Activated CD4-positive, alpha-beta memory T cell treated with anti-CD3 and anti-CD28 coated beads, Interleukin-2, amount 10 ng/mL, durations not matched to agents 7 days and 5 days (primary cell): ENCODE measurements at regions of chr1 and their contacts with region 1.

Region 1: DNA sequence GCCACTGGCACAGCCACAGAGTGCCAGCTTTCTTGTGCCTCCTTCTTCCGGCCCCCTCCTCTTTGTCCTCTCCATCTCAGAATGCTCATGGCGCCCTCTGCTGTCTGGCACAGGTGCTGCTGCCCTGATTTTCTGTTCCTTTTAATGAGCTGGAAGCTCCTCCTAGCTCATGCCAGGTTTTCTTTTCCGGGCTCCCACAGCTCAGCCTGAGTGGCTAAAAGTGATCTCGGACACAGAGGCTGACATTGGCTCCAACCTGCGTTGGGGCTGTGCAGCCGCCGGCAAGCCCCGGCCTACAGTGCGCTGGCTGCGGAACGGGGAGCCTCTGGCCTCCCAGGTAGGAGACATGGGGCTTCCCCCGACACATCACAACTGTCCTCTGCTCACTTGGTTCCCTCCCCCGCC is 18.7 kb downstream of the CNTN2 start:
- DNase-seq: peak; percentile 76
- H3K4me3 Mint-ChIP-seq: no peak overlapping the region
- H3K27ac Mint-ChIP-seq: no peak overlapping the region
- H3K4me1 Mint-ChIP-seq: no peaks in the 10 kb centered on the region
- H3K27me3 Mint-ChIP-seq: no peaks in the 10 kb centered on the region

Region 2: GRCh38 chr1:204889681-204890383 is 171.8 kb before region 1 on chr1:
- CTCF ChIA-PET with region 1: no interaction called
- POLR2A ChIA-PET with region 1: no interaction called
- DNase-seq: no peak
- H3K4me3 Mint-ChIP-seq: no peak overlapping the region
- H3K27ac Mint-ChIP-seq: no peak overlapping the region
- H3K4me1 Mint-ChIP-seq: no peaks in the 10 kb centered on the region
- H3K27me3 Mint-ChIP-seq: peaks cover 44% of the 10 kb centered on the region

Region 3: GRCh38 chr1:204975570-204976235 is 86.0 kb before region 1 on chr1:
- CTCF ChIA-PET with region 1: interaction called, 36 read pairs
- POLR2A ChIA-PET with region 1: no interaction called
- DNase-seq: peak; percentile 47
- H3K4me3 Mint-ChIP-seq: no peak overlapping the region
- H3K27ac Mint-ChIP-seq: no peak overlapping the region
- H3K4me1 Mint-ChIP-seq: no peaks in the 10 kb centered on the region
- H3K27me3 Mint-ChIP-seq: peaks cover 23% of the 10 kb centered on the region

Region 4: DNA sequence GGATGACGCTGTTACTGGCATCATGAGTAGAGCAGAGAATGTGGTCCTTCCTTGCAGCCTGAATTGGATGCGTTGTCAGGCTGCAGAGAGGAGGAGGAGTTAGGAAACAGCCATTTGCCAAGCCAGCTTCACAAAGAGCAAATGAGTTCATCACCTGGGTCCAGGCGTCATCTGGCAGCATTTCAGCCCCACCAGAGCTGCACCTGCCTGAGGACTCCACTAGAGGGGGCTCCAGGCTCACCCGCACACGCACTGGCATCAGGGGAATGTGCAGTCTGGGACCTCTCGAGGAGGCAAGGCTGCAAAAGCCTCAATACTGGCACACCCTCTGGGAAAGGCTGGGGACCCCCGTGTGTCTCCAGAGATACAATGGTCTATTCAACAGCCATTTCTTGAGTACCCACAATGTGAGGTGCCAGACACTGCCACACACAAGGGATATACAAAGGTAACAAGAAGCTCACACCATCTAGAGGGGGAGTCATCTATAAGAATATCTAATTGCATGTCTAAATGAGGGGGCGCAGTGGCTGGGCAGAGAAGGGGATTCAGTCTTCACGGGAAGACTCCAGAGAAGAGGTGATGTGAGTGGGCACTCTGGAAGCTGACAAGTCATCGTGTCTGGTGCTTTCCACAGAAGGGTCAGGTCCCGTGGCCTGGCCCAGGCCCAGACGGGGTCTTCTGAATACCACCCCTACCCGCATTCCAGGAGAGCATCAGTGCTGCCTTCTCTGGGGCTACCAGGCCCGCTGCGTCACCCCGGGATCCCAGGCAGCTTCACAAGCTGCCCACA is 72.2 kb before region 1 on chr1:
- CTCF ChIA-PET with region 1: interaction called, 70 read pairs
- POLR2A ChIA-PET with region 1: no interaction called
- DNase-seq: peak; percentile 63
- H3K4me3 Mint-ChIP-seq: no peak overlapping the region
- H3K27ac Mint-ChIP-seq: no peak overlapping the region
- H3K4me1 Mint-ChIP-seq: peaks cover 16% of the 10 kb centered on the region
- H3K27me3 Mint-ChIP-seq: peaks cover 7% of the 10 kb centered on the region

Region 5: GRCh38 chr1:205040691-205041417 is 20.8 kb before region 1 on chr1:
- CTCF ChIA-PET with region 1: interaction called, 19 read pairs
- POLR2A ChIA-PET with region 1: no interaction called
- DNase-seq: no peak
- H3K4me3 Mint-ChIP-seq: no peak overlapping the region
- H3K27ac Mint-ChIP-seq: no peak overlapping the region
- H3K4me1 Mint-ChIP-seq: no peaks in the 10 kb centered on the region
- H3K27me3 Mint-ChIP-seq: peaks cover 44% of the 10 kb centered on the region

Region 6: DNA sequence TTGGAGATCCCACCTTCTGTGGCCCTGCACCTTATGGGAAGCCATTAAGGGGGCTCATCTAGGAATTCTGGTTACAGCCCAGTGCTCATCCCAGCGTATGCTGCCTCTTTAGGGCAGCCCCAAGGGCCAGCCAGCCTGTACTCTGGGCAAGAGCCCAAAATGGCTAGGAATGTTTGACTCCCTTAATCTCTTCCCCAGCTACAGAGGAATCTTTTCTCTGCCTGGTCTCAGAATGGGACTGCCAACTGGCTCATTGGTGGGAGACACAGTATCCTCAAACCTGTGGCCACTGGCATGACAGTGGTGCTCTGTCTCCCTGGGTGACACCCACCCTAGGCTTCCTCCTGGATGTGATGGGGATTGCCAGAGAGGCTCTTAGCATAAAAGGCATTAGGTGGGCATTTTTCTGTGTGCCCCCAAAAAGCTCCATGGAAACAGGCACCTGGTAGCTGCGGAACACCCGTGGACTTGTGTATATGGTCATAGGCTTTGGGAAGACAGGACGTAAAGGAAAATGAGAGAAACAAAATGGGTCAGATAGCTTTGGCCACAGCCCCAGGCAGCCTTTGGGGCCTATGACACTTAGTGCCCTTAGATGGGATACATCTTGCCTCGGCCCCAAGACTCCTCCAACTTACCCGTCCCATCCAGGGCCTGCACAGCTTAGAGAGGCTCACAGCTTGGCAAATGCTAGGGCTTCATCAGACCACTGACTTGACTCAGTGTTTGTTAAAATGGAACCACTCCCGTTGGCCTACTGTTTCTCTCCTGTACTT is 15.7 kb after region 1 on chr1:
- CTCF ChIA-PET with region 1: interaction called, 27 read pairs
- POLR2A ChIA-PET with region 1: interaction called, 5 read pairs
- DNase-seq: peak; percentile 14
- H3K4me3 Mint-ChIP-seq: no peak overlapping the region
- H3K27ac Mint-ChIP-seq: no peak overlapping the region
- H3K4me1 Mint-ChIP-seq: no peaks in the 10 kb centered on the region
- H3K27me3 Mint-ChIP-seq: no peaks in the 10 kb centered on the region

Region 7: DNA sequence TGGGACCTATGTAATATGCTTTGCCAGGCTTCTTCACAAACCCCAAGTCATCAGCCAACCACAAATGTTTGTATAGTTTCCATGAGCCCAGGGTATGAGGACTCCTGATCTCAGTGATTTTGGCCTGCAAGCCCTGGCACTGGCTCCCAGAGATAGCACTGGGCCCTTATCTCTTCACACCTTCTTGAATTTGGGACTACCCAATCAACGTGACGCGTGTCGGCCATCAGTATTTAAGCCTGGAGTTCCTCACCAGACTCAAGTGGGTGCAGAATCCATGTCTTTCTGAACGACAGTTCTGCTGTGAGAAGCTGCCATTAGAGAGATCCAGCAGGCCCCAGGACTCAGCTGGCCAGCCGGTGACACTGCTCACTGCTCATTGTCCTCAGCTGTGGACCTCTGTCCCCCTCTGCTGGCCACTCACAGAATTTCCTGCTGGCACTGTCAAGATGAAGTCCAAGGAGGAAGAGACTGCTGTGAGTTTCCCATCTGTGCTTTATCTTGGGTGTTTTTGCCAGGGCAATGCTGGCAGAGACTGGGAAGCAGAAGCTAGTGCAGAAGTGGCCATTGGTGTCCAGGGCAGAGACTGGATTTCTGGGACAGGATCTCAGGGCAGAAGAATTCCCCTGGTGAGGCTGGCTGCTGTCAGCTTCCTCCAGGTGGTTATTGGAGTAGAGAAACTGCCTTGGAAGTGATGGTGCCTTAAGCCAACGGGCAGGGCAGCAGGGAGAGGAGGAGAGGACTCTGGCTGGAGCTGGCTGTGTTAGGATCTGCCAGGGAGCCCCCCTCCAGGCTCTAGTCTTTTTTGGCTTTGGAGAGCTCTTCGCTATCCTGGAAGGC is 194.5 kb after region 1 on chr1:
- CTCF ChIA-PET with region 1: interaction called, 34 read pairs
- POLR2A ChIA-PET with region 1: no interaction called
- DNase-seq: peak; percentile 87
- H3K4me3 Mint-ChIP-seq: no peak overlapping the region
- H3K27ac Mint-ChIP-seq: no peak overlapping the region
- H3K4me1 Mint-ChIP-seq: no peaks in the 10 kb centered on the region
- H3K27me3 Mint-ChIP-seq: peaks cover 2% of the 10 kb centered on the region